K562 (cell line): ENCODE measurements at regions of chr16 and their contacts with region 1.

Region 1: GRCh38 chr16:23435500-23435899 is 17.5 kb downstream of the COG7 start:
- DNase-seq: peak; percentile 65 to 80 (median 78)
- ATAC-seq: peak; percentile 97
- H3K4me3 ChIP-seq: no peak overlapping the region
- H3K27ac ChIP-seq: no peak overlapping the region
- H3K4me1 ChIP-seq: peaks cover 10 to 18% of the 10 kb centered on the region in 2 experiments; a peak in 4 of 5 replicates
- H3K27me3 ChIP-seq: no peaks in the 10 kb centered on the region
- CTCF ChIP-seq: peak; percentile 94 to 99 (median 95)
- EP300 ChIP-seq: no peak
- POLR2A ChIP-seq: no peak
- RAD21 ChIP-seq: peak in 1 of 2 experiments; percentile 58; a peak in 2 of 4 replicates

Region 2: GRCh38 chr16:23182460-23183309 is 252.8 kb before region 1 on chr16 and contains the start of gene SCNN1G:
- CTCF ChIA-PET with region 1: interaction called, 21 read pairs
- POLR2A ChIA-PET with region 1: no interaction called
- in situ Hi-C with region 1: loop called (anchors 10 kb)
- intact Hi-C with region 1: loop called (anchors 1 kb)
- DNase-seq: peak; percentile 65 to 82 (median 78)
- ATAC-seq: peak; percentile 100
- H3K4me3 ChIP-seq: no peak within 1 kb of the TSS
- H3K27ac ChIP-seq: no peak within 1 kb of the TSS
- H3K4me1 ChIP-seq: peaks cover 0 to 13% of the 10 kb centered on the region in 2 experiments; a peak in 2 of 5 replicates
- H3K27me3 ChIP-seq: peaks cover 20 to 29% of the 10 kb centered on the region in 2 experiments; a peak in 4 of 5 replicates
- CTCF ChIP-seq: peak; percentile 82 to 98 (median 98)
- EP300 ChIP-seq: no peak
- POLR2A ChIP-seq: no peak
- RAD21 ChIP-seq: peak; percentile 57 to 92
- polyA plus RNA-seq, gene SCNN1G: not detected

Region 3: GRCh38 chr16:23464196-23464595 is 28.7 kb after region 1 on chr16:
- CTCF ChIA-PET with region 1: no interaction called
- POLR2A ChIA-PET with region 1: no interaction called
- in situ Hi-C with region 1: no loop called
- intact Hi-C with region 1: no loop called
- DNase-seq: no peak
- ATAC-seq: no peak
- H3K4me3 ChIP-seq: no peak overlapping the region
- H3K27ac ChIP-seq: no peak overlapping the region
- H3K4me1 ChIP-seq: peaks cover 0 to 5% of the 10 kb centered on the region in 2 experiments; a peak in 3 of 5 replicates
- H3K27me3 ChIP-seq: no peaks in the 10 kb centered on the region
- CTCF ChIP-seq: no peak
- EP300 ChIP-seq: no peak
- POLR2A ChIP-seq: no peak
- RAD21 ChIP-seq: no peak

Region 4: DNA sequence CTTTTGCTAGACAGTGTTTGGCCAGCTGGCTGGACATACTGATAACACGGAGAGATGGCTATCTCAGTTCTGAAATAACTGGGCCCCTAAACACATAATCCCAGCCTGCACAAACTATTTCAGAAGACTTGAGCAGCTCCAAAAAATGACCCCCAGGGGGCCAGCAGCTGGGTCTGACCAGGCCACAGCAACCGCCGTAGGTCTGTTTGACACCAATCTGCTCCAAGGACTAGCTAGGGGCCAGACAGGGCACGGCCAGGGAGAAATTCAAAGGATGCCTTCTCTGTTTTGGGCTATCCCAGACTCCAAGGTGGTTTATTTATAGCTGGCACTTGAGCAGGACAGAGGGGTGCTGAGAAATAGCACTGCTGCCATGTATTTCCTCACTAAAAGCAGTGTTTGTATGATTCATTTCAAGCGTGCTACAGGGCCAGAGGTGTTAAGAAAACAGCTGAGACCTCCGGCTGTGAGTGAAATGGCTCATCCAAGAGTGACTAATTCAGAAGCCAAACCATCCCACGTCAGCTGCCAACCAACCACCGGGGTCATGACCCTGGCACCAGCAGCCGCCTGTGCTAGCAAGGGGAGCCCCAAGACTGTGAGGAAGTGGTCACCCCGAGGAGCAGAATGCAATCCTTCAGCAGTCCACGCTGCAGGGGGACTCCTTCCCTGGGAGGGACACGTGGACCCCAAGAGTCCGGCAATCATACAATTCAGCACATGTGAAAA is 69.1 kb after region 1 on chr16:
- CTCF ChIA-PET with region 1: no interaction called
- POLR2A ChIA-PET with region 1: no interaction called
- in situ Hi-C with region 1: no loop called
- intact Hi-C with region 1: loop called (anchors 5 kb)
- DNase-seq: peak; percentile 40 to 70 (median 42)
- ATAC-seq: peak; percentile 68
- H3K4me3 ChIP-seq: no peak overlapping the region
- H3K27ac ChIP-seq: peak overlapping the region; percentile 40; the same call in 2 of the 3 replicates
- H3K4me1 ChIP-seq: peaks cover 36 to 49% of the 10 kb centered on the region in 2 experiments; a peak in 4 of 5 replicates
- H3K27me3 ChIP-seq: no peaks in the 10 kb centered on the region
- CTCF ChIP-seq: peak in 2 of 3 experiments; percentile 16 to 21; a peak in 2 of 6 replicates
- EP300 ChIP-seq: peak; percentile 19; the same call in 1 of the 2 replicates
- POLR2A ChIP-seq: no peak
- RAD21 ChIP-seq: no peak